Transverse colon (tissue), 4 donors: ENCODE measurements at regions of chr11 and their contacts with region 1.

Region 1: DNA sequence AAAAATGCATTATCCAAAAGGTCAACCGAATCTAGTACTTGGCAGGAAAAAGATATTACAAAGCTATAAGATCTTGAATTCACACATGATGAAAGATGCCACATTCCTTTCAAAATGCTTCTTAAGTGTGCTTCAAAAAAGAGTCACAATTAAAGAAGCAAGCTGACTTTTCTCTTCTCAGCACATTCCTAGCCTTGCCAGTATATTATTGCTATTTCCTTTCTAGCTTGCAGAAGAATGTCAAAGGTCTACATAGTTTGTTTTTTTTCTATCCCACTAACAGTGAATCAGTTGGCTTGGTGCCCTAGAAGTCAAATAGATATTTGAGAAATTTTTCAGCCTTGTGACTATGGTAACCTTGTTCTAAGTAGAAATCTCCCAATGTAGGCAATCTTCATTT is 56.8 kb downstream of the GUCY1A2 start:
- DNase-seq: no peak
- H3K4me3 ChIP-seq: no peak overlapping the region
- H3K27ac ChIP-seq: no peak overlapping the region
- H3K4me1 ChIP-seq: no peaks in the 10 kb centered on the region
- H3K27me3 ChIP-seq: no peaks in the 10 kb centered on the region
- CTCF ChIP-seq: no peak
- EP300 ChIP-seq: no peak
- POLR2A ChIP-seq: no peak

Region 2: DNA sequence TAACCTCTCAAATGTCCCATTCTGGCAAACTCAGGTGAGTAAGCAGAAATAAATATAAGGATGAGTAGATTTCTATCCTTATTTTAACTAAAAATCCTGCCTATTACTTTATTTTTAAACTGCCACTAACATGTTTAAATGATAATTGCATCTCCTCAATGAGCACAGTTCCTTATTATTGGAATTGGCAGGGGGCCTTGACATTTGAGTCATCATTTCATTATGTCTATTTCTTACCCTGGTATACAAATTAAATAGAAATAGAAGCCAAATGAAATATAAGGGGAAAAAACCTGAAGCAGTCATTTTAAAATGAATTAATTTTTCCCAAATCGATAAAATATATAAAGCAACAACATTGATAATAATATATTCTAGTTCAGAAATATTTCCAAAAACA is 24.4 kb before region 1 on chr11:
- in situ Hi-C with region 1: no loop called
- intact Hi-C with region 1: loop called (anchors 1 kb)
- DNase-seq: no peak
- H3K4me3 ChIP-seq: no peak overlapping the region
- H3K27ac ChIP-seq: no peak overlapping the region
- H3K4me1 ChIP-seq: no peaks in the 10 kb centered on the region
- H3K27me3 ChIP-seq: no peaks in the 10 kb centered on the region
- CTCF ChIP-seq: no peak
- EP300 ChIP-seq: no peak
- POLR2A ChIP-seq: no peak